ENCODE measurements at regions of chr4 and their contacts with region 1.

Region 1: DNA sequence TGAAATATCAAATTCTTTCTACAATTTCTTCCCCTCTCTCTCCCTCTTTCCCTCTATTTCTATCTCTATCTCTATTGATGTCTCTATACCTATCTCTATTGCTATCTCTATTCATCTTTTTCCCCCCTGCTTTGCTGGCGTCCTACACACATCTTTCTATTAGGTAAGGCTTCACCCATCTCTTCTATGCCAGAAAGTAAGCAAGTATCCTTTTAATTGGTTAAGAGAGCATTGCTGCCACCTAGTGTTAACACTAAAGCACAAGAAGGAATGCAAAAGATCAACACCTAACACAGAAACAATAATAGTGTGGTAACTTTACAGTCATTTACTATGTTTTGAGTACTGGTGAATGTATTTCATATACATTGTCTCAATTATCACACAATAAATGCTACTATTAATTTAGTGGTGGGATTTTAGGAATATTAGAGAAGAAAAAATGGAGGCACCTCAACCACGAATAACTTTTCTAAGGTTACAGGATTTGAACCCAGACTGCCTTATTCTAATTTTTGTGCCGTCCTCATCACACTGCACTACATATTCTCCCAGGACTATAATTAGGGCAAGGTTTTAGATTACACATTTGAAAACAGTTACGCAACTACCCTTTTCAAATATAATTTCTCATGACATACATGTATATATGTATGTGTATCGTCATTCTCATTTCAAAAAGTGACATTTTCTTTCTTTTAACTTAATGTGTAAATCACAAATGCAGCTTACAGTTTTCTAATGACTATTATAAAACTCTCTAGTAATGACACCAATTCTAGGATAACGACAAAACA is 3.7 kb upstream of the C4orf36 start:
- DNase-seq: peak; percentile 83
- H3K4me3 Mint-ChIP-seq: no peak overlapping the region
- H3K27ac Mint-ChIP-seq: no peak overlapping the region
- H3K4me1 Mint-ChIP-seq: peaks cover 7% of the 10 kb centered on the region
- H3K27me3 Mint-ChIP-seq: no peaks in the 10 kb centered on the region
- CTCF ChIP-seq: peak; percentile 61

Region 2: GRCh38 chr4:86593688-86594558 is 302.0 kb before region 1 on chr4 and contains the start of gene PTPN13:
- CTCF ChIA-PET with region 1: interaction called, 5 read pairs
- POLR2A ChIA-PET with region 1: interaction called, 10 read pairs
- intact Hi-C with region 1: loop called (anchors 1 kb)
- DNase-seq: peak; percentile 100
- H3K4me3 Mint-ChIP-seq: peak within 1 kb of the TSS; percentile 97
- H3K27ac Mint-ChIP-seq: peak within 1 kb of the TSS; percentile 90
- H3K4me1 Mint-ChIP-seq: peaks cover 32% of the 10 kb centered on the region
- H3K27me3 Mint-ChIP-seq: no peaks in the 10 kb centered on the region
- CTCF ChIP-seq: no peak
- total RNA-seq, gene PTPN13: 23.0 and 28.3 TPM in 2 replicates

Region 3: DNA sequence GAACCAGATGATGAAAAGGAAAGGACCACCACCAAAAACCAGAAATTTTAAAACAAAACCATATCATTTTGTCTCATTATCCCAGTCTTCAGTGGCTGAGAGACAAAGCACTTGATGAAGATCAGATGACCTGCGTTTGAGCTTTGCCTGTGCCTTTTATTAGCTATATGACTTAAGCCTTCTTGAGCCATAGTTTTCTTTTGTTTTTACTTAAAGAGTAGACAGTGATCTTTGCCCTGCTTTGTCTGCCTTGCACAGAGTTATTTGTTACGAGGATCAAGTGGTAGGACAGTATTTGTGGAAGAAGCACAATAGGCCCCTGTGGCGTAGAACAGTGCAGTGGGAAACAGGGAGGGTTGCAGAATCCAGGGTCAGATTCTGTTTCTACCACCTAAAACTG is 136.6 kb before region 1 on chr4:
- CTCF ChIA-PET with region 1: no interaction called
- POLR2A ChIA-PET with region 1: no interaction called
- intact Hi-C with region 1: no loop called
- DNase-seq: no peak
- H3K4me3 Mint-ChIP-seq: no peak overlapping the region
- H3K27ac Mint-ChIP-seq: no peak overlapping the region
- H3K4me1 Mint-ChIP-seq: peaks cover 5% of the 10 kb centered on the region
- H3K27me3 Mint-ChIP-seq: no peaks in the 10 kb centered on the region
- CTCF ChIP-seq: no peak

Region 4: DNA sequence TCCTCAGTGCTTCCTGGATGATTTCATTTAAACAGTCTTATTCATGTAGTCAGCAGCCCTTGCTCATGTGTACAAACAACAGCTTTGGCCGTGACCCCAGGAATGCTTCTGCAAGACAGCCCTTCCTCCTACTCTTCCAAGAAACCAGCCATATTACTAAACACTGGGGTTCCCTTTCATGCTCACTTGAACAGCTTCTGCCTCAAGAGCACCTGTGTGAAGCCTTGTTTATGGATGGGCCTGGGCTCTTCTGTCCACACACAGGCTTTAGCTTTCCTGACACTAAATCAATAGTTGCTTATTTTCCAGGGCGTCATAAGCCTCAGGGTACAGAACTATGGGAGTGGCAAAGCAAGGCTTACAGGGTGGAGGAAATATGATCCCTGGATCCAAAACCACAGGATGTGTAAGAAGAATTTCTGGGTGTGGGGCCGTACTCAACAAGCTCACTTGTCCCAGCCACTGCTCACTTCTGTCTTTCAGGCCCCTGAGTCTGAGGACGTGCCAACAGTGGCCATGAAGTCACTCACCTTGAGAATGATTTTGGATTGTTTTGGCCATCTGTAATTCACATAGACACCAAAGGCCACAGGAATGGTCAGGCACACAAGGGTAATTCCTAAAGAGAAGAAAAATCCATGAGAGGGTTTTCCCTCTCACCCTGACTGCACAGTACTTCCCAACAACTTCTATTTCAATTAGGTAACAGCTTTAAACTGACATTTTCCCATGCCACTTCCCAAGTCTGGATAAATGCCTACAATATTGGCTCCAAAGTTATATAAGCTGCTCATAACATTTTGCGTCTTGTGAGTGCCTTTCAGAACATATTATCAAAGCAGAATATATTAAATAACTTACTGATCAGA is 64.4 kb before region 1 on chr4:
- CTCF ChIA-PET with region 1: interaction called, 4 read pairs
- POLR2A ChIA-PET with region 1: interaction called, 41 read pairs
- intact Hi-C with region 1: loop called (anchors 1 kb)
- DNase-seq: peak; percentile 97
- H3K4me3 Mint-ChIP-seq: peak overlapping the region; percentile 45
- H3K27ac Mint-ChIP-seq: peak overlapping the region; percentile 98
- H3K4me1 Mint-ChIP-seq: peaks cover 18% of the 10 kb centered on the region
- H3K27me3 Mint-ChIP-seq: no peaks in the 10 kb centered on the region
- CTCF ChIP-seq: no peak

Region 5: DNA sequence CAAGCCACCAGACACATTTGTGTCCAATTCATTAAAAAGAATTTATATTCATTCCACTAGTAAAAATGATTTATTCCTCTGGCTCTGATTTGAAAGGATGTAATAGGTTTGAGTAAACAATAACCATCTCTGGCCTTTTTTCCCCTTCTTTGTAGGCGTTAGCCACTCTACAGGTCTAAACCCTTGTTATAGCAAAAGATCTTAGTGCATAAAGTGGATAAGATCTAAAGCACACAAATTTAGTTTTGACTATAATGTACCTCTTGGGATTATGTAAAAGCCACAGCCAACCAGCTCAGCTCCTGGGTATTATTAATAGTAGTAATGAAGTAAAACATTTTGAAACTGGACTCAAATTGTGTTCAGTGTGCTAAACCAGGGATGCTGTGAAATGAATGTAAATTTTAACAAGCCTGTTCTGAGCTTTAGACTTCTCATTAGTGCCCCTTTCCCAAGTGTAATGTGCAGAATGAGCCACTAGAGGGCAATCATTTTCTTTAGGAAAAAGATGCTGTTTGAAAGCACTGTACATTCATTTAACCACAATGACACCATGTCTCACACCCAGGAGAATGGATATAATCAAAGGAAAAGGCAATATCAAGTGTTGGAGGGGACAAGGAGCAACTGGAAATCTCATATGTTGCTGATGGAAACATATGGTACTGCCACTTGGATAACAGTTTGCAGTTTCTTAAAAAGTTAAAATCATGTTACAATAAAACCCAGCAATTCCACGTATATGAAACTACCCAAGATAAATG is 254.8 kb after region 1 on chr4:
- CTCF ChIA-PET with region 1: interaction called, 6 read pairs
- POLR2A ChIA-PET with region 1: no interaction called
- intact Hi-C with region 1: loop called (anchors 1 kb)
- DNase-seq: peak; percentile 85
- H3K4me3 Mint-ChIP-seq: no peak overlapping the region
- H3K27ac Mint-ChIP-seq: no peak overlapping the region
- H3K4me1 Mint-ChIP-seq: peaks cover 11% of the 10 kb centered on the region
- H3K27me3 Mint-ChIP-seq: no peaks in the 10 kb centered on the region
- CTCF ChIP-seq: peak; percentile 81

Region 6: DNA sequence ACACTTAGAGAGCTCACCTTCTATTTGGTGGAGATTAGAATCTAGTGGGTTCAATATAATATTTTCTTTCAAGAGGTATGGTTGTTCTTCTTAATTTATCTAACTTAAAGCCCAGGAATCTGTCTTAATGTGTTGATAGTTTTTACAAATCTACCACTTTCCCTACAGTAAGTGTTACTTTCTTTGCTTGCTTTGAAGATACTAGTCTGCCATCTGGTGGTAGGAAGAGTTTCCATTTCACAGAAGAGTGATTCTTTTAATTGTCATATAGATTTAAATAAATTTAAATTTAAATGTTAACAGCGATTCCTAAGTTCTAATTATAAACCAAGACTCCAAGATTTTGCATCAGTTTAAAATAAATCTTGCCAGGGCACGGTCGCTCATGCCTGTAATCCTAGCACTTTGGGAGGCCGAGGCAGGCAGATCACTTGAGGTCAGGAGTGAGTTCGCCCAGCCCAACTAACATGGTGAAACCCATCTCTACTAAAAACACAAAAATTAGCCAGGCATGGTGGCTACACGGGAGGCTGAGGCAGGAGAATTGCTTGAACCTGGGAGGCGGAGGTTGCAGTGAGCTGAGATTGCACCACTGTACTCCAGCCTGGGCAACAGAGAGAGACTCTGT is 570.0 kb after region 1 on chr4:
- CTCF ChIA-PET with region 1: no interaction called
- POLR2A ChIA-PET with region 1: no interaction called
- intact Hi-C with region 1: loop called (anchors 5 kb)
- DNase-seq: peak; percentile 50
- H3K4me3 Mint-ChIP-seq: no peak overlapping the region
- H3K27ac Mint-ChIP-seq: no peak overlapping the region
- H3K4me1 Mint-ChIP-seq: no peaks in the 10 kb centered on the region
- H3K27me3 Mint-ChIP-seq: no peaks in the 10 kb centered on the region
- CTCF ChIP-seq: peak; percentile 47

Region 7: DNA sequence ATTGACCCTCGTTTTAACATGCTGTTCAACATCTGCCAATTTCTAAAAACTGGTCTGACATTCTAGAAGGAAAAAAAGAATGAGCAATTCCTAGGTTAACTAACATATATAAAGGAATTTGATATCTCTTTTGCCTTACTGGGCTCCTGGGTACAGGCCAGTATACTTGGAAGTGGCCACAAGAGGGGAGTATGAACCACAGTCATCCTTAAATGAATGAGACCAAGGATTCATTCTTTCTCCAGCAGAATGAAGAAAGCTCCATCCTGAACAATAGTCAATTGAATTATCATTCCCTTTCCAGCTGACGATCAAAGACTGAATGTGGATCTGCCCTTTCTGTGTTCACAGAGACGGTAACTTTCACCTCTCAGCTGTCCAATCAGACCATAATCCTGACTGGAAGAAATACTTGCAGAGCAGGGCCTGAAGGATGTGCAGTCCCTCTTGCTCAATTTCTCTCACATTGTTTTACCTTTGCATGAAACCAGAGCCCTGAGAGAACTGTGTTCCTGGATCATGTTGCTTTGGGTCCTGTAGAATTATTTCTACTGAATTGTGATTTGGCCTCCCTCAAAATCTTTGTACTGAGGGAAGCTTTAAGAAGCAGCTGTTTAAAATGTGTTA is 648.1 kb after region 1 on chr4:
- CTCF ChIA-PET with region 1: no interaction called
- POLR2A ChIA-PET with region 1: no interaction called
- intact Hi-C with region 1: no loop called
- DNase-seq: peak; percentile 74
- H3K4me3 Mint-ChIP-seq: no peak overlapping the region
- H3K27ac Mint-ChIP-seq: no peak overlapping the region
- H3K4me1 Mint-ChIP-seq: no peaks in the 10 kb centered on the region
- H3K27me3 Mint-ChIP-seq: no peaks in the 10 kb centered on the region
- CTCF ChIP-seq: peak; percentile 53

Measured in MCF 10A (cell line).